GM12878 (cell line): ENCODE measurements at regions of chr17 and their contacts with region 1.

Region 1: DNA sequence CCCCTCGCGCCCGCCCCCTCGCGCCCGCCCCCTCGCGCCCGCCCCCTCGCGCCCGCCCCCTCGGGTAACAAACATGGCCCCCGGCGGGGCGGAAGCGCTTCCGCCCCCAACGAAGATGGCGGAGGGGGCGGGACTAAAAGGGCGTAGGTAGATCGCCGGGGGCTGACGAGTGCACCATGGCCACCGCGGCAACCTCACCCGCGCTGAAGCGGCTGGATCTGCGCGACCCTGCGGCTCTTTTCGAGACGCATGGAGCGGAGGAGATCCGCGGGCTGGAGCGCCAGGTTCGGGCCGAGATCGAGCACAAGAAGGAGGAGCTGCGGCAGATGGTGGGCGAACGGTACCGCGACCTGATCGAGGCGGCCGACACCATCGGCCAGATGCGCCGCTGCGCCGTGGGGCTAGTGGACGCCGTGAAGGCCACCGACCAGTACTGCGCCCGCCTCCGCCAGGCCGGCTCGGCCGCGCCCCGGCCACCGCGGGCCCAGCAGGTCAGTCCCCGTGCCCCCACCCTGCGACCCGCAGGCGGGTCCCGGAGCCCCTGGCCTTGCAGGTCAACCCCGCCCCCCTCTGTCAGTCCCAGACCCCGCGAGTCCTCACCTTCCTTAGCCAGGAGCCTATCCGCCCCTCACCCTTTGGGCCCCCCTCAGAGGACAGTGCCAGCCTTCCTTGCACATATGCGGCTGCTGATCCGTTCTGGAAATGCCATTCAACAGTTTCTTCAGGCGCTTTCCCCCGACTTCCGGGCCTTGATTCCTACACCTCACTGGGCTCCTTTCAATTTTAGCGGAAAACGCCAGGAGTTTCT is at the start of gene COG1:
- DNase-seq: no peak
- ATAC-seq: peak; percentile 85
- H3K4me3 ChIP-seq: peak within 1 kb of the TSS; percentile 76
- H3K27ac ChIP-seq: peak within 1 kb of the TSS; percentile 86
- H3K4me1 ChIP-seq: no peaks in the 10 kb centered on the region
- H3K27me3 ChIP-seq: no peaks in the 10 kb centered on the region
- CTCF ChIP-seq: no peak
- EP300 ChIP-seq: no peak
- POLR2A ChIP-seq: peak; percentile 80
- RAD21 ChIP-seq: no peak
- polyA plus RNA-seq, gene COG1: 10.5 to 11.4 TPM

Region 2: GRCh38 chr17:73156166-73156840 is 36.8 kb before region 1 on chr17:
- CTCF ChIA-PET with region 1: interaction called, 17 read pairs
- POLR2A ChIA-PET with region 1: interaction called, 5 read pairs
- RAD21 ChIA-PET with region 1: interaction called, 13 read pairs
- SMC1A ChIA-PET with region 1: interaction called, 12 read pairs
- in situ Hi-C with region 1: no loop called
- intact Hi-C with region 1: no loop called
- DNase-seq: no peak
- ATAC-seq: peak; percentile 91
- H3K4me3 ChIP-seq: peak overlapping the region; percentile 39; the same call in 1 of the 2 replicates
- H3K27ac ChIP-seq: peak overlapping the region; percentile 80
- H3K4me1 ChIP-seq: peaks cover 40% of the 10 kb centered on the region
- H3K27me3 ChIP-seq: no peaks in the 10 kb centered on the region
- CTCF ChIP-seq: peak; percentile 87 to 88 (median 87)
- EP300 ChIP-seq: no peak
- POLR2A ChIP-seq: no peak
- RAD21 ChIP-seq: peak; percentile 73

Region 3: GRCh38 chr17:73182616-73183310 is 10.3 kb before region 1 on chr17:
- CTCF ChIA-PET with region 1: interaction called, 12 read pairs
- POLR2A ChIA-PET with region 1: interaction called, 3 read pairs
- RAD21 ChIA-PET with region 1: interaction called, 3 read pairs
- SMC1A ChIA-PET with region 1: interaction called, 9 read pairs
- in situ Hi-C with region 1: no loop called
- intact Hi-C with region 1: no loop called
- DNase-seq: no peak
- ATAC-seq: no peak
- H3K4me3 ChIP-seq: no peak overlapping the region
- H3K27ac ChIP-seq: no peak overlapping the region
- H3K4me1 ChIP-seq: no peaks in the 10 kb centered on the region
- H3K27me3 ChIP-seq: no peaks in the 10 kb centered on the region
- CTCF ChIP-seq: no peak
- EP300 ChIP-seq: no peak
- POLR2A ChIP-seq: no peak
- RAD21 ChIP-seq: no peak

Region 4: DNA sequence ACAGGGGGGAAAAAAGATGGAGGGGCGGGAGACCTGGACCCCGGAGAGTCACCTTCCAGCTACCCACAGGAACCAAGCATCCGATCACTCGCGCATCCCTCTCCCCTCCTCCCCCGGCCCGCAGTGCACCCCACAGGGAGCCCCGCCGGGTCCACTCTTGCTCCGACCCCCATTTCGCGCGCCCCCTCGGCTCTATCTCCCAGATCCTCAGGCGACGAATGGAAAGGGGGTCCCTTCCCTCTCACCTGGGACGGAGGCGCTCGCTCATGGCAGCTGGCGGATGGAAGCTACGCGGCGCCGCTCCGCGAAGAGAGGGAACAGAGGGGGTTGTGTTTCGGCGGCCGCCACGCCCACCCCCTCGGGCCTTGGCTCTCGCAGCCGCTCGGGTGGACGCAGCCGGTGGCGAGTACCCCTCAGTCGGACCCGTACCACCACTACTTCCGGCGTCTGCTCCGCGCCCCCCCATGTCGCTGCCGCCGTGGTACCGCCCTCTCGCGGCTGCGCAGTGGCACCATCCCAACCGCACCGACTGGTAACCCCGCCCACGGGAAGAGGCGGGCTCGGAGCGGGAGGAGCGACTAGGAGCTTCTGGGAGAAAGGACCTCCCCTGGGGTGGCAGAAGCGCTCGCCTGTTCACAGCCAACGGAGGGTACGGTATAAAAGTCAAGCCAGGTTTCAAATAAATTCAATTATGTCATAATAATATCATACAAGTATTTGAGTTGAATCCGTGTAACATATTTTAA is 38.9 kb after region 1 on chr17:
- CTCF ChIA-PET with region 1: interaction called, 20 read pairs
- POLR2A ChIA-PET with region 1: interaction called, 25 read pairs
- RAD21 ChIA-PET with region 1: interaction called, 23 read pairs
- SMC1A ChIA-PET with region 1: interaction called, 61 read pairs
- in situ Hi-C with region 1: no loop called
- intact Hi-C with region 1: loop called (anchors 2 kb)
- DNase-seq: peak; percentile 86
- ATAC-seq: peak; percentile 83
- H3K4me3 ChIP-seq: peak overlapping the region; percentile 87
- H3K27ac ChIP-seq: peak overlapping the region; percentile 89
- H3K4me1 ChIP-seq: peaks cover 20% of the 10 kb centered on the region
- H3K27me3 ChIP-seq: no peaks in the 10 kb centered on the region
- CTCF ChIP-seq: peak in 1 of 3 experiments; percentile 19; a peak in 2 of 6 replicates
- EP300 ChIP-seq: no peak; a peak in 1 of 4 replicates
- POLR2A ChIP-seq: peak; percentile 93
- RAD21 ChIP-seq: no peak

Region 5: GRCh38 chr17:73247726-73248125 is 54.6 kb after region 1 on chr17:
- CTCF ChIA-PET with region 1: interaction called, 61 read pairs
- POLR2A ChIA-PET with region 1: interaction called, 3 read pairs
- RAD21 ChIA-PET with region 1: interaction called, 5 read pairs
- SMC1A ChIA-PET with region 1: interaction called, 28 read pairs
- in situ Hi-C with region 1: no loop called
- intact Hi-C with region 1: loop called (anchors 5 kb)
- DNase-seq: no peak
- ATAC-seq: no peak
- H3K4me3 ChIP-seq: no peak overlapping the region
- H3K27ac ChIP-seq: no peak overlapping the region
- H3K4me1 ChIP-seq: no peaks in the 10 kb centered on the region
- H3K27me3 ChIP-seq: no peaks in the 10 kb centered on the region
- CTCF ChIP-seq: peak in 1 of 3 experiments; percentile 32; a peak in 1 of 6 replicates
- EP300 ChIP-seq: no peak
- POLR2A ChIP-seq: no peak
- RAD21 ChIP-seq: no peak

Region 6: DNA sequence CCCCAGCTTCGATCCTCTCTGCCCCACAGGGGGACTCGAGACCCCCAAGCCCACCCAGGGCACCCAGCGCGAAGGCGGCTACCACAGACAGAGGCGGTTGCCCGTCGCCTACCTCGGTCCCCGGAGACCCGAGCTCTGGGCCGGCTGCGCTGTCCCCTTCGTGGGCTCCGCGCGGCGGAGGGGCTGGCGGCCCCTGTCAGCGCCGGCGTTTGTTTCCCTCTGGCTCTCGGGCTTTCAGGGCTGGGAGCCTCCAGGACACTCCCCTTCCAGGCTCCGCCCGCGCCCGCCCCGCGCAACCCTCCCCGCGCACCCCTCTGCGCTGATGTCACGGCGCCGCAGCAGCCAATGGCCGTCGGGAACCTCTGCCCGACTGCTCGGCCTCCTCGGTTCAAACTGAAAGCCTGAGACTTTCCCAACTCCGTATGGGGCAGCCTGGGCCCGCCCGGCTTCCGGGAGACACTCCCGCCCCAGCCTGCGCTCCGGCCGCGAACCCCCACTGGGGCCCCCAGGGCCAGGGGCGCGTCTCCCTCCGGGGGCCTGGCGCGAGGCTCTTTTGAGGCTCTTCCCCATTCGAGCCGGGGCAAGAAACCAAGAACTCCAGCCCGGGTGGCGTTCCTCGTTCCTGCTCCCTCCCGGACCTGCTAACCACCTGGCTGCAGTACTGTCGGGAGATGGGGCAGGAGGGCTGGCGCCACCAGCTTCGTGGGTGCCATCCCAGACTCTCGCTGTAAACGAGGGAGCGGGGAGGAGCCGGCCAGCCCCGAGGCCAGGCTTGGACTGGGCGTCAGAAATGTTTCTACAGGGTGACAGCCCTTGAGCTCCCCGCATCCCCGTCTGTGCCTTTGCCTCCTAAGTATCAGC is 118.9 kb after region 1 on chr17 and contains the start of gene CDC42EP4:
- CTCF ChIA-PET with region 1: interaction called, 3 read pairs
- POLR2A ChIA-PET with region 1: no interaction called
- RAD21 ChIA-PET with region 1: interaction called, 4 read pairs
- SMC1A ChIA-PET with region 1: no interaction called
- in situ Hi-C with region 1: no loop called
- intact Hi-C with region 1: loop called (anchors 5 kb)
- DNase-seq: no peak
- ATAC-seq: peak; percentile 92
- H3K4me3 ChIP-seq: peak within 1 kb of the TSS; percentile 93
- H3K27ac ChIP-seq: peak within 1 kb of the TSS; percentile 69
- H3K4me1 ChIP-seq: peaks cover 4% of the 10 kb centered on the region
- H3K27me3 ChIP-seq: no peaks in the 10 kb centered on the region
- CTCF ChIP-seq: no peak
- EP300 ChIP-seq: no peak
- POLR2A ChIP-seq: peak; percentile 62
- RAD21 ChIP-seq: no peak
- polyA plus RNA-seq, gene CDC42EP4: 0.05 to 0.20 TPM

Region 7: DNA sequence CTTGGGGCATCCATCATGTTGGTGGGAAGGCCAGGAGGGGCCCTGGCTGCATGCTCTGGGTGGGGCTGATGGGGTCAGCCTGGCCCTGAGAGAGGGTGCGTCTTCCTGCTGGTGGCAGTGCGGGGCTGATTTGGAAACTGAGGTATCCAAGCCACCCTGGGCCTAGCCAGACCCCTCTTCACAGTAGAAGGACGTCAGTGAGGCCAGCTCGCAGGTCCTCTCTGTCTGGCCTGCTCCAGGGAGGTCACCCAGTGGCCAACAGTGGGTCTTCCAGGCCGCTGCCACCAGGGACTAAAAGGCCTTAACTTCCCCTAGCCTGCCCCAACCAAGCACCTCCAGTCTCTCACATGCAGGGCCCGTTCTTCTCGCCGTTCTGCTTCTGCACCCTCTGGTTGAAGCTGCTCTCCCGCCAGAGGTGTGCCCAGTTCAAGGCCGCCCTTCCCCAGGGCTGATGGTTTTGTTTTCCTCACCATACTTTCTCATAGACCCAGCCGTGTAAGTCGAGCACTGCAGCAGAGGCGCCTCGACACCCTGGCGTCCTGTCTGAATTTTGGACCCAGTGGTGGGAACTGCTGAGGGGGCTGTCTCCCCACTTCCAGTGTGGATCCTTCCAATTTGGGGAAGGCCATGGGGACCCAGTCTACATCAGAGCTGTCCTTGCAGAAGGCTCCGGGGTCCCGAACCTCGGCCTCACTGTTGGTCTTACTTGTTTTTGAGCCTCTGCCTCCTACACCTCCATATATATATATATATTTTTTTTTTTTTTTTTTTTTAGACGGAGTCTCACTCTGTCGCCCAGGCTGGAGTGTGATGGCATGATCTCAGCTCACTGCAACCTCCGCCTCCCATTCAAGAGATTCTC is 161.6 kb after region 1 on chr17:
- CTCF ChIA-PET with region 1: no interaction called
- POLR2A ChIA-PET with region 1: no interaction called
- RAD21 ChIA-PET with region 1: no interaction called
- SMC1A ChIA-PET with region 1: no interaction called
- in situ Hi-C with region 1: no loop called
- intact Hi-C with region 1: no loop called
- DNase-seq: no peak
- ATAC-seq: no peak
- H3K4me3 ChIP-seq: no peak overlapping the region
- H3K27ac ChIP-seq: no peak overlapping the region
- H3K4me1 ChIP-seq: no peaks in the 10 kb centered on the region
- H3K27me3 ChIP-seq: no peaks in the 10 kb centered on the region
- CTCF ChIP-seq: no peak
- EP300 ChIP-seq: no peak
- POLR2A ChIP-seq: no peak
- RAD21 ChIP-seq: no peak